ENCODE measurements at regions of chr13 and their contacts with region 1.

Region 1: GRCh38 chr13:23466144-23467002 is 32.9 kb upstream of the SACS start:
- DNase-seq: peak; percentile 57 to 80
- H3K4me3 ChIP-seq: peak overlapping the region; percentile 55 to 63
- H3K27ac ChIP-seq: peak overlapping the region; percentile 71 to 78
- H3K4me1 ChIP-seq: peaks cover 0 to 37% (median 25%) of the 10 kb centered on the region in 4 donors
- H3K27me3 ChIP-seq: no peaks in the 10 kb centered on the region
- CTCF ChIP-seq: peak; percentile 62 to 66

Region 2: GRCh38 chr13:23384111-23384510 is 82.3 kb before region 1 on chr13:
- intact Hi-C with region 1: loop called (anchors 10 kb)
- DNase-seq: no peak
- H3K4me3 ChIP-seq: no peak overlapping the region
- H3K27ac ChIP-seq: no peak overlapping the region
- H3K4me1 ChIP-seq: peaks cover 0 to 22% (median 10%) of the 10 kb centered on the region in 4 donors
- H3K27me3 ChIP-seq: no peaks in the 10 kb centered on the region
- CTCF ChIP-seq: no peak

Region 3: DNA sequence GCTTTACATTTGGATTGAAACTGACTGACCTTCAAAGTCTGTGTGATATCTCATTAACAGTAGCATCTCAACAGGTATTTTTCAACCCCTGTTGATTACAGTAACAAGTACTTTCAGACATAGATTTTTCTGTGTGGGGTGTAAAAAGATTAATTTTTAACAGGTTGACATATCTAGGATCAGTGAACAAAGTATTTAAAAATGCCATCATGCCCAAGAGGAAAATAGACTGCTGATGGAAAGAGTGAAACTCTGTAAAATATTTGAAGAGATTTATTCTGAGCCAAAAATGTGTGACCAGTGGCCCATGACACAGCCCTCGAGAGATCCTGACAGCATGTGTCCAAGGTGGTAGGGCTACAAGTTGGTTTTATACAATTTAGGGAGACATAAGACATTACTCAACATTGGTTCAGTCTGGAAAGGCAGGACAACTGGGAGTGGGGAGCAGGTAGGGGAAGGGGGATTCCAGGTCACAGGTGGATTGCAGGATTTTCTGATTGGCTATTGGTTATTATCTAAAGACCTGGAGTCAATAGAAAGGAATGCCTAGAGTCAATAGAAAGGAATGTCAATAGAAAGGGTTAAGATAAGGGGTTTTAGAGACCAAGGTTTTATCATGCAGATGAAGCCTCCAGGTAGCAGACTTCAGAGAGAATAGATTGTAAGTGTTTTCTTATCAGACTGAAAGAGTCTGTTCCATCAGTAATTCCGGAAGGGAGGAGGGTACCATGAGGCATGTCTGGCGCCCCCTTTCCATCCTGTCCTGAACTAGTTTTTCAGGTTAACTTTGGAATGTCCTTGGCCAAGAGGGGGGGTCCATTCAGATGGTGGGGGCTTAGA is 132.9 kb after region 1 on chr13:
- intact Hi-C with region 1: no loop called
- DNase-seq: no peak
- H3K4me3 ChIP-seq: no peak overlapping the region
- H3K27ac ChIP-seq: no peak overlapping the region
- H3K4me1 ChIP-seq: no peaks in the 10 kb centered on the region
- H3K27me3 ChIP-seq: no peaks in the 10 kb centered on the region
- CTCF ChIP-seq: no peak

Region 4: DNA sequence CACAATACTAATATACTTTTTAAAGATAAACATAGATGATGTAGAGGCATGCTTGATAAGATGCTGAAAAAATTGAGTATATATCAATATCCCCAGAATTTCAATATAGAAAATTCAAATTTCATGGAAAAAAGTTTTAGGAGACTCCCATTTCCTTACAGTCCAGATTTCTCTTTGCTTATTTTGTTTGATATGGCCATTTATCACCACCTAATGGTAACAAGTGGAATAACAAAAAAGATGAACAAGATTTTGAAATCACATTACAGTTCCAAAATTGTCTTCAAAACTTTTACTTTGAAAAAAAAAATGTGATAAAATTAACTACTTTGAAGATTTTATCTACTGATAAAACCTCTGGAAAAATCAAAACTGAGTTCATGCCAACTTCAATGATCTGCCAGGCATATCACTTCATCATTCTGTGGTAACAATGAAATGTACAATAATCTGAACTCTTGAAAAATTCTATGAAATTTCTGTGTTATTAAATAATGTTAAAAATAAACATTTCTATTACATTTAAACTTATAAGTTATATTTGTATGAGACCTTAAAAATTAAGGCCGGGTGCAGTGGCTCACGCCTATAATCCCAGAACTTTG is 405.3 kb after region 1 on chr13:
- intact Hi-C with region 1: loop called (anchors 5 kb)
- DNase-seq: no peak
- H3K4me3 ChIP-seq: no peak overlapping the region
- H3K27ac ChIP-seq: no peak overlapping the region
- H3K4me1 ChIP-seq: no peaks in the 10 kb centered on the region
- H3K27me3 ChIP-seq: no peaks in the 10 kb centered on the region
- CTCF ChIP-seq: peak; percentile 49 to 73